Activated naive CD8-positive, alpha-beta T cell treated with anti-CD3 and anti-CD28 coated beads, Interleukin-2, amount 10 ng/mL, durations not matched to agents 7 days and 5 days (primary cell): ENCODE measurements at regions of chr15 and their contacts with region 1.

Region 1: DNA sequence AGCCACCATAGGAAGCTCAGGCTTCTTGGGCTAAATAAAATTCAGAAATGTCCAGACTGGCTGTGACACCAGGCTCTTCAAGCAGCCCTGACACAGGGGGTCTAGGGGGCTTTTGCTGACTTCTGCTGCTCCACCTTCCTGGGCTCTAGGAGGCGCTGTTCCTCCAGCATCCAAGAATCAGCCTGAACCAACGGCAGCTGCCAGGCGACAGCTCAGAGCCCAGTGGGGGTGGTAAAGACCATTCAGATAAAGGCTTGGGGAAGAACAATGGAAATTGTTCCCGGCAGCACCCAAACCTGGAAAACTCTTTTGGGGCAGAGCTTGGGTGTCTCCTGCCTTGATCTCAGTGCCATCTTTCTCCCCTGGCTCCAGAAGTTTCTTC is 21.6 kb upstream of the PSTPIP1 start:
- DNase-seq: peak; percentile 67
- ATAC-seq: peak; percentile 58
- H3K4me3 Mint-ChIP-seq: no peak overlapping the region
- H3K27ac Mint-ChIP-seq: no peak overlapping the region
- H3K4me1 Mint-ChIP-seq: peaks cover 27% of the 10 kb centered on the region
- H3K27me3 Mint-ChIP-seq: peaks cover 6% of the 10 kb centered on the region

Region 2: GRCh38 chr15:77031376-77032050 is 58.2 kb after region 1 on chr15:
- POLR2A ChIA-PET with region 1: interaction called, 12 read pairs
- DNase-seq: peak; percentile 67
- ATAC-seq: peak; percentile 90
- H3K4me3 Mint-ChIP-seq: no peak overlapping the region
- H3K27ac Mint-ChIP-seq: peak overlapping the region; percentile 62
- H3K4me1 Mint-ChIP-seq: peaks cover 18% of the 10 kb centered on the region
- H3K27me3 Mint-ChIP-seq: no peaks in the 10 kb centered on the region